ENCODE measurements at regions of chr12 and their contacts with region 1.

Region 1: GRCh38 chr12:52278541-52279421 is 4.3 kb downstream of the KRT86 start:
- DNase-seq: peak; percentile 92
- H3K4me3 ChIP-seq: peak overlapping the region; percentile 14 to 31
- H3K27ac ChIP-seq: peak overlapping the region in 1 of 2 experiments; percentile 97; a peak in 2 of 4 replicates
- H3K4me1 ChIP-seq: peaks cover 11 to 28% of the 10 kb centered on the region in 2 experiments; a peak in 3 of 4 replicates
- H3K27me3 ChIP-seq: no peaks in the 10 kb centered on the region
- CTCF ChIP-seq: peak; percentile 97
- EP300 ChIP-seq: no peak
- RAD21 ChIP-seq: peak; percentile 84

Region 2: GRCh38 chr12:52171950-52172512 is 106.8 kb before region 1 on chr12:
- CTCF ChIA-PET with region 1: interaction called, 12 read pairs
- POLR2A ChIA-PET with region 1: no interaction called
- DNase-seq: no peak
- H3K4me3 ChIP-seq: no peak overlapping the region
- H3K27ac ChIP-seq: no peak overlapping the region; a peak in 1 of 4 replicates
- H3K4me1 ChIP-seq: peaks cover 12 to 52% of the 10 kb centered on the region in 2 experiments; a peak in 2 of 4 replicates
- H3K27me3 ChIP-seq: no peaks in the 10 kb centered on the region
- CTCF ChIP-seq: peak; percentile 56
- EP300 ChIP-seq: no peak
- RAD21 ChIP-seq: peak; percentile 57

Region 3: GRCh38 chr12:52213512-52214420 is 65.0 kb before region 1 on chr12:
- CTCF ChIA-PET with region 1: interaction called, 22 read pairs
- POLR2A ChIA-PET with region 1: no interaction called
- DNase-seq: peak; percentile 82
- H3K4me3 ChIP-seq: no peak overlapping the region; a peak in 1 of 4 replicates
- H3K27ac ChIP-seq: peak overlapping the region in 1 of 2 experiments; percentile 5; a peak in 1 of 4 replicates
- H3K4me1 ChIP-seq: peaks cover 15 to 68% of the 10 kb centered on the region in 2 experiments; a peak in 3 of 4 replicates
- H3K27me3 ChIP-seq: no peaks in the 10 kb centered on the region
- CTCF ChIP-seq: peak; percentile 95
- EP300 ChIP-seq: 0 out of 4 replicates have a peak, but pooled peaks of 1 of the 2 experiments have one; percentile 32
- RAD21 ChIP-seq: peak; percentile 96

Region 4: DNA sequence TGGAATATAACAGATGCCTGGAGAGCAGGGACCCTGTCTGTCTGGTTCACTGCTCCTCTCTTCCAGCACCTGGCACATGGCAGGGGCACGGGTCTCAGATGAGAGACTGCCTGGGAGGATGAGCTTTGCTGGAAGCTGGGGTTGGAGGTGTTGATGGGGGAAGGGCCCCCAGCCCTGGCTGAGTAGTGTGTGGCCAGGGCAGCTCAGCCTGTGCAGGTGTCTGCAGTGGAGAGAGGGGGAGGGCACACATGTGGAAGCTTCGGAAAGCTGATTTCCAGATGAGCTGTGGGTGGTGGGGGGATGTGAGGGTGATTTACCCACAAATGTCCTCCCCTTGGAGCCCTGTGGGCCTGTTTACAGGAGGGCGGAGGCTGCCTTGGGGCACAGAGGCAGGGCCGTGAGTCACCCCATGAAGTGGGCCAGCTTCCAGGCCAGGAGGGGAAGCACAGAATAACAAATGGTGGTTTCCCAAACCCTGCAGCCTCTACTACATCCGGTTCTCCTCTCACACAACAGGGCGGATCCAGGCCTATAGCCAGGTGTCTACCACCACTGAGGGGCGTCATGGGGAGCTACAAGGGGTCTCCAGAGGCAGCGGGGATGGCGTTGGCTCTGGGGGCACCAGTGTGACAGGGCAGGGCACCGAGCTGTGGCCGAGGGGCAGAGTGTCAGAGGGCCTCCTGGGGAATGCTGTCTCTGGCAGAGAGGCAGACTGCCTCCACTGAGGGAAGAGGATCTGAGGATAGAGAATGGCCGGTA is 34.7 kb before region 1 on chr12:
- CTCF ChIA-PET with region 1: interaction called, 18 read pairs
- POLR2A ChIA-PET with region 1: no interaction called
- DNase-seq: peak; percentile 60
- H3K4me3 ChIP-seq: no peak overlapping the region
- H3K27ac ChIP-seq: peak overlapping the region; percentile 71 to 91
- H3K4me1 ChIP-seq: peaks cover 23 to 24% of the 10 kb centered on the region in 2 experiments; a peak in 3 of 4 replicates
- H3K27me3 ChIP-seq: no peaks in the 10 kb centered on the region
- CTCF ChIP-seq: no peak
- EP300 ChIP-seq: no peak; a peak in 1 of 4 replicates
- RAD21 ChIP-seq: no peak

Region 5: DNA sequence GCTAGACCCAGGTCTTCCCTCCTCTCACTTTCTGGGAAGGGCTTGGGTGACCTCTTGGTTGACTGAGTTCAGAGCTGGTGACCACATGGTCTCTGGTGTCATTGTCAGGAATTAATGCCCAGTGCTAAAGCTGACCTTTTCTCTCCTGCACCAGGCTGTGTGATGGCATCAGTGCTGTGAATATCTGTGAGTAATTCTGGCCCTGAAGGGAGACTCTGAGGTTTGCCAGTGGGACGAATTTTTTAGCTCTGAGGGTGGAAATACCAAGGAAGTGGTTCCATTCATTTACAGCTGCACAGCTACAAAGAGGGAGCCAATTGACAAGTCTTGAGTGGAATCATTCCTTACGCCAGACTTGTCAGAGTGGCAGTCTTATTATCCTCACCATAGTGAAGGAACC is 10.6 kb before region 1 on chr12:
- CTCF ChIA-PET with region 1: interaction called, 80 read pairs
- POLR2A ChIA-PET with region 1: no interaction called
- DNase-seq: no peak
- H3K4me3 ChIP-seq: no peak overlapping the region
- H3K27ac ChIP-seq: peak overlapping the region in 1 of 2 experiments; percentile 38; a peak in 2 of 4 replicates
- H3K4me1 ChIP-seq: no peaks in the 10 kb centered on the region; a peak in 1 of 4 replicates
- H3K27me3 ChIP-seq: no peaks in the 10 kb centered on the region
- CTCF ChIP-seq: no peak
- EP300 ChIP-seq: no peak
- RAD21 ChIP-seq: no peak

Region 6: DNA sequence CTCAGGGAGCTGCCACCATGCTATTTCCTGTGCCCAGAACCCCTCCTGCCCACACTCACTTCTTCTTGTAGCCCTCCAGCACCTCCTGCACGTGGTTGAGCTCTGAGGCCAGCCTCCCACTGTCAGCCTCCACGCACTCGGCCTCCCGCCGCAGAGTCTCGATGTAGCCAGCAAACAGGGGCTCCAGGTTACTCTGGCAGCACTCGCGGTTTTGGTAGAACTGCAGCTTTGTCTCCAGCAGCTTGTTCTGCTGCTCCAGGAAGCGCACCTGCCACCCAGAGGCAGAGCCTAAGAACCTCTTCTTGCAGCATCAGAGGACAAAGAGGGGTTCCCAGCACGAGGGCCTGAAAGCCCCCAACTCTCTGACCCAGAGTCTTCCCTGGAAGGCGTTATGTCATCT is 40.3 kb after region 1 on chr12:
- CTCF ChIA-PET with region 1: interaction called, 66 read pairs
- POLR2A ChIA-PET with region 1: no interaction called
- DNase-seq: no peak
- H3K4me3 ChIP-seq: no peak overlapping the region
- H3K27ac ChIP-seq: no peak overlapping the region
- H3K4me1 ChIP-seq: no peaks in the 10 kb centered on the region
- H3K27me3 ChIP-seq: no peaks in the 10 kb centered on the region; the same call in 1 of the 2 replicates
- CTCF ChIP-seq: no peak
- EP300 ChIP-seq: no peak
- RAD21 ChIP-seq: no peak

Region 7: DNA sequence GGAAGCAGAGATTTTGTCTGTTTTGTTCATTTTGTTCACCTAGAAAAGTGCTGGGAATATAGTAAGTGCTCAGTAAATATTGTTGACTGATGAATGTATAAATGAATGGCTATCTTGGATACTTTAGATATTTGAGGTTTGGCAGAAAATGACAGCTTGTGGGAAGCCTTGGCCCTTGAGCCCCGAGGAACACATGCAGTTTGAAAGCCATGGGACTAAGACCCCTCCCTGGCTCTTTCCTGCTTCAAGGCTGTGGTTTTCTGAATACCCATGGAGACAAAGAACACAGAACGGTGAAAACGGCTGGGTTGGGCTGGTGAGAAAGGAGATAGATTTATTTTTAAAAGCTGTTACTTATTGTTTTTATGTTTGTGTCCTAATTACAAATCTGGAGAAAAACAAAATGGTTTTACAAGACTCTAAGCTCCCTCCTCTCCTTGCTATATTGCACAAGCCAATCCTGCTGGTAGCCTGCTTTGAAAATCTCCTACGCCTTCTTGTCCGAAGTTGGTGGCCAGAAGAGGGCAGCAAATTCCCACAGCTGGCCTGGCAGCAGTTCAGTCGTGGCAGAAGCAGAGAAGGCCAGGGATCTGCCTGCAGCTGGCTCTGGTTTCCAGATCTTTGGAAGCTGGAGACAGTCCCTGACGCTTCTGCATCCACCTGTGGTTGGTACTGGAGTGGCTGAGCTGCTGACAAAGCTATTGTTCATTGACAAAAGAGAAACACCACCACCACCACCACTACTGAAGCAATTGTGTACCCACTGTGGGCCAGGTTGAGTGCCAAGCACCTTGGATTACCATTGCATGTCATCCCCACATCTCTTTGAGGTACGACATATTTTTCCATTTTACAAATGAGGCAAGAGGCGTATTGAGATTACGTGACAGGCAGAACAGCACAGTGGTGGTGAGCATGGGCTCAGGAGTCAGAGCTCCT is 93.7 kb after region 1 on chr12:
- CTCF ChIA-PET with region 1: interaction called, 10 read pairs
- POLR2A ChIA-PET with region 1: no interaction called
- DNase-seq: peak; percentile 87
- H3K4me3 ChIP-seq: peak overlapping the region in 1 of 2 experiments; percentile 43; a peak in 1 of 4 replicates
- H3K27ac ChIP-seq: no peak overlapping the region
- H3K4me1 ChIP-seq: no peaks in the 10 kb centered on the region
- H3K27me3 ChIP-seq: peaks cover 48% of the 10 kb centered on the region
- CTCF ChIP-seq: peak; percentile 81
- EP300 ChIP-seq: no peak
- RAD21 ChIP-seq: peak; percentile 94

Region 8: GRCh38 chr12:52486166-52487105 is 207.7 kb after region 1 on chr12:
- CTCF ChIA-PET with region 1: no interaction called
- POLR2A ChIA-PET with region 1: no interaction called
- DNase-seq: no peak
- H3K4me3 ChIP-seq: no peak overlapping the region
- H3K27ac ChIP-seq: no peak overlapping the region
- H3K4me1 ChIP-seq: no peaks in the 10 kb centered on the region
- H3K27me3 ChIP-seq: peaks cover 17% of the 10 kb centered on the region; the same call in 1 of the 2 replicates
- CTCF ChIP-seq: no peak
- EP300 ChIP-seq: no peak
- RAD21 ChIP-seq: no peak

Measured in SK-N-SH (cell line).